A549 (cell line): ENCODE measurements at regions of chr15 and their contacts with region 1.

Region 1: GRCh38 chr15:72155635-72156616 is 37.7 kb downstream of the SENP8 start:
- DNase-seq: peak; percentile 87 to 96
- ATAC-seq: peak; percentile 94 to 97
- H3K4me3 ChIP-seq: peak overlapping the region; percentile 39
- H3K27ac ChIP-seq: peak overlapping the region; percentile 73 to 81
- H3K4me1 ChIP-seq: peaks cover 21% of the 10 kb centered on the region
- CTCF ChIP-seq: peak; percentile 99
- EP300 ChIP-seq: no peak
- POLR2A ChIP-seq: no peak
- RAD21 ChIP-seq: peak; percentile 100

Region 2: DNA sequence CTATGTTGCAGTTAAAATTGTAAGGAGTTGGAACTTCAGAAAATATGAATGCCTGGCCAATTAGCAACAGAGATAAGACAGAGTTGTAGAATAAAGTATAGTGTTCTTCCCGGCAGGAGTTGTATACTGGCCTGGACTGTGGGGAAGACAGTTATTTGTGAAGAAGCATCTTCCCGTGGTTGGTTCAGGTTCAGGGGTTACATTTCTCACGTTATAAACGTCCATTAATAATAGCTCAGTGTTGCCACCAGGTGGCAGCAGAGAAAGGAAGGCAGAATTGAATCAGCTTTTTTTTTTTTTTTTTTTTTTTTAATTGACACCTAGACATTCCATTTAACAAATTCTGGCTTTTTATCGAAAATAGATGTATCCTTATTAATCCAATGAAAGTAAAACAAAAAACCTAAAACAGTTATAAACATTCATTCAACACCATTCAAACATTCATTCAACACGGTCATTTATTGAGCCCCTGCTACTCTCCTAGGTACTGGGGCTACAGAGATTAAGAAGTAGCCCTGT is 412.0 kb before region 1 on chr15:
- CTCF ChIA-PET with region 1: interaction called, 27 read pairs
- POLR2A ChIA-PET with region 1: no interaction called
- DNase-seq: peak in 1 of 2 experiments; percentile 73
- ATAC-seq: no peak
- H3K4me3 ChIP-seq: no peak overlapping the region
- H3K27ac ChIP-seq: peak overlapping the region; percentile 89 to 99
- H3K4me1 ChIP-seq: peaks cover 52% of the 10 kb centered on the region
- CTCF ChIP-seq: peak; percentile 96
- EP300 ChIP-seq: no peak
- POLR2A ChIP-seq: no peak
- RAD21 ChIP-seq: peak; percentile 78 to 80

Region 3: DNA sequence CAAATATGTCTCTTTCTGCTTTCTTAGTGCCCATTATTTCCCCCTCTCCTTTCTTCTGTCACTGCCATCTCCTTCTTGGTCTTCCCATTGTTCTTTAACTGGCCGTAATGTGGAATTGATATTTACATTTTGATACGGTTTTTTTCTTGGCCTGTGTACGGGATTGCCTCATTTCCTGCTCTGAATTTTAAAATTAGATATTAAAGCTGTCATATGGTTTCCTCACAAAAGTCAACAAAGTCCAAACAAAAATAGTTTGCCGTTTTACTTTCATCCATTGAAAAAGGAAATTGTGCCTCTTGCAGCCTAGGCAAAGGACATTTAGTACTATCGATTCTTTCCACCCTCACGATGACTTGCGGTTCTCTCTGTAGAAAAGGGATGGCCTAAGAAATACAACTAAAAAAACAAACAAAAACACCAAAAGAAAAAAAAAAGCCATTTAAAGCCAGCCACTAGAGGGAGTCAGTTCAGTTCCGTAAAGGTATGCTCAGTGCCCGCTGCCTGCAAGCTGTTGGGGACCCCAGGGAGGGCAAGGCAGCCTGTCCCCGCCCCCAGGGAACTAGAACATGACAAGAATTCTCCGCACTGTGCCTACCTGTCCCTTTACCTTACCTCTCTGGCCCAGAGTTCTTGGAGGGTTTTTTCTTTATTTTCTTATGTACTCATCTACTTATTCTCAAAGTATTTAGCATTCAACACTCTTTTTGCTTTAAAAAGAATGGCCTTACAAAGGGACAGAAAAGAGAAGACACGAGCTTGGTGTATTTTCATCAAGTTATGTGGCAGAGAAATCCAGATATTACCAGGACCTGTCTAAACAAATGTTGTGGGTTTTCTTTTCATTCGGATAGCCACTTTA is 375.6 kb before region 1 on chr15:
- CTCF ChIA-PET with region 1: interaction called, 23 read pairs
- POLR2A ChIA-PET with region 1: no interaction called
- DNase-seq: peak; percentile 84 to 90
- ATAC-seq: peak; percentile 59 to 80
- H3K4me3 ChIP-seq: no peak overlapping the region
- H3K27ac ChIP-seq: peak overlapping the region; percentile 72 to 75
- H3K4me1 ChIP-seq: peaks cover 26% of the 10 kb centered on the region
- CTCF ChIP-seq: peak; percentile 93
- EP300 ChIP-seq: no peak
- POLR2A ChIP-seq: no peak
- RAD21 ChIP-seq: peak; percentile 67 to 77

Region 4: GRCh38 chr15:71812966-71813722 is 342.8 kb before region 1 on chr15:
- CTCF ChIA-PET with region 1: interaction called, 40 read pairs
- POLR2A ChIA-PET with region 1: no interaction called
- DNase-seq: no peak
- ATAC-seq: no peak
- H3K4me3 ChIP-seq: no peak overlapping the region
- H3K27ac ChIP-seq: no peak overlapping the region
- H3K4me1 ChIP-seq: 0 out of 3 replicates have a peak, but pooled peaks cover under 1% of the 10 kb centered on the region
- CTCF ChIP-seq: no peak
- EP300 ChIP-seq: no peak
- POLR2A ChIP-seq: no peak
- RAD21 ChIP-seq: no peak

Region 5: DNA sequence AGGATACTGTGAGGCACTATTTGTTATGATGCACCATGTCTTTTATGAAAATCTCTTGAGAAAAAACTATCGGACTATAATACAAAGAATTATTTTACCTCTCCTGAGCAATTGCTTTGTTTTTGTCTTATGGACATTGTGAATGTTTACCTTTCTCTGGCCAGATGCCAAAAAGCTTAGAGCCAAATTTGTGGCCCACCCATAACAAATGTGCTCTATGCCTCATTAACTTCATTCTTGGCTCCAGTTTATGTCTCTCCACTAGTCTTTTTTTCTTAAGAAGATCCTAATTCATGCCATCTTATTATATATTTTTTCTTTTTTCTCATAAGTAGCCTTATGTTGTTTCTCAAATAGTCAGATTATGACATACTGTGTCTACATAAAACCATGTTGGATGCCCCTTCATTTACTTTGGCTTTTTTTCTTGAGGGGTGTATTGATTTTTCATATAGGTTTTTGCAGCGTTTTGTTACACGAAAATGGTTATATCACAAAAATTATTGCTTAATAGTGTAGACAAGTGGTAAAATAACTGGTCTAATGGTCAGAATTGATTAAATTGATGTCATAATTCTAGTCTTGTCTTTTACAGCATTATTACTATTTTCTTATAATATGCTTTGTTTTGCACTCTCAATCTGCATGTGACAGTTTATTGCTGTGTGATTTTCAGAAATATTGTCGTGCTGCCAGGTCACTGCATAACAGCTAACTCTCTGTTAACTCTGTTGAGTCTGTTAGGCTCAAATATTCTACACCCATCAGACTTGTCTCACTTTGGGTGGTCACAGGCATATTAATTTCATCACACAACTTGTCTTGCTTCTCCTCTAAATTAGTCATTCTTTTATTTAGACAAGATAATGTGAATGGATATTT is 19.5 kb before region 1 on chr15:
- CTCF ChIA-PET with region 1: interaction called, 57 read pairs
- POLR2A ChIA-PET with region 1: no interaction called
- DNase-seq: no peak
- ATAC-seq: no peak
- H3K4me3 ChIP-seq: no peak overlapping the region
- H3K27ac ChIP-seq: no peak overlapping the region
- H3K4me1 ChIP-seq: peaks cover 28% of the 10 kb centered on the region
- CTCF ChIP-seq: no peak
- EP300 ChIP-seq: no peak
- POLR2A ChIP-seq: no peak
- RAD21 ChIP-seq: no peak

Region 6: DNA sequence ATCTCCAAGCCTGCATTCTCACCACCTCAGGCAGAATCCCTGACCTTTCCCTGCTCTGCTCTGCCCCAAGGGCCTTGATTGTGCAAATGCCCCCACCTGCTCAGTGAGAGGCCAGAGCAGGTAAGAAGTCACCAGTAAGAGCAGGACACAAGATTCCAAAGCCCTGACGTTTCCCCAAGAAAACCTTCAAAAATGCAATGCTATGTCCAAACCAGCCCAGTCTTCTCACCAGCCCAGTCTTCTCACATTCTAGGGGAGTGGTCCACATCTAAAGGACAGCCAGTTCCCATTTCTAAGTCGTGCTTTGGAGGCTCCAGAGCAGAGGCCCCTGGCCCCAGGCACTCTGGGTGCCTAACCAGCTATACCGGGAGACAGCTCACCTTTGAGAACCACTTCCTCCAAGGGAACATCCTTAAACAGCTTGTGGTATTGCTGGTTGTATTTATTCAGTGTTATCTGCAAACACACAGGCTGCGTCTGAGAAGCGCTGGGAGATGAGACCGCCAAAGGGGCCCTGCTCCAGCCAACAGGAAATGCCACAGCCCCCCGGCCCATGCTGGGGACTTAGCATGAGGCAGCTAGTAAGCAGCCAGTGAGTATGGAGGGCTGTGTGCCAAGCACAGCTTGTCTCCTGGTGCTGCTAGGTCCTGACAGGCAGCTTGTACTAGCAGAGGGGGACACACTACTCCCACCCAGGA is 12.3 kb after region 1 on chr15:
- CTCF ChIA-PET with region 1: interaction called, 44 read pairs
- POLR2A ChIA-PET with region 1: no interaction called
- DNase-seq: no peak
- ATAC-seq: peak in 1 of 2 experiments; percentile 40; a peak in 3 of 6 replicates
- H3K4me3 ChIP-seq: no peak overlapping the region
- H3K27ac ChIP-seq: no peak overlapping the region
- H3K4me1 ChIP-seq: peaks cover 6% of the 10 kb centered on the region; the same call in 1 of the 3 replicates
- CTCF ChIP-seq: no peak
- EP300 ChIP-seq: no peak
- POLR2A ChIP-seq: no peak
- RAD21 ChIP-seq: no peak

Region 7: GRCh38 chr15:72189250-72189902 is 33.5 kb after region 1 on chr15:
- CTCF ChIA-PET with region 1: interaction called, 10 read pairs
- POLR2A ChIA-PET with region 1: no interaction called
- DNase-seq: no peak
- ATAC-seq: no peak
- H3K4me3 ChIP-seq: no peak overlapping the region
- H3K27ac ChIP-seq: no peak overlapping the region
- H3K4me1 ChIP-seq: peaks cover 14% of the 10 kb centered on the region
- CTCF ChIP-seq: no peak
- EP300 ChIP-seq: no peak
- POLR2A ChIP-seq: no peak
- RAD21 ChIP-seq: no peak